HCT116 (cell line): ENCODE measurements at regions of chr1 and their contacts with region 1.

Region 1: DNA sequence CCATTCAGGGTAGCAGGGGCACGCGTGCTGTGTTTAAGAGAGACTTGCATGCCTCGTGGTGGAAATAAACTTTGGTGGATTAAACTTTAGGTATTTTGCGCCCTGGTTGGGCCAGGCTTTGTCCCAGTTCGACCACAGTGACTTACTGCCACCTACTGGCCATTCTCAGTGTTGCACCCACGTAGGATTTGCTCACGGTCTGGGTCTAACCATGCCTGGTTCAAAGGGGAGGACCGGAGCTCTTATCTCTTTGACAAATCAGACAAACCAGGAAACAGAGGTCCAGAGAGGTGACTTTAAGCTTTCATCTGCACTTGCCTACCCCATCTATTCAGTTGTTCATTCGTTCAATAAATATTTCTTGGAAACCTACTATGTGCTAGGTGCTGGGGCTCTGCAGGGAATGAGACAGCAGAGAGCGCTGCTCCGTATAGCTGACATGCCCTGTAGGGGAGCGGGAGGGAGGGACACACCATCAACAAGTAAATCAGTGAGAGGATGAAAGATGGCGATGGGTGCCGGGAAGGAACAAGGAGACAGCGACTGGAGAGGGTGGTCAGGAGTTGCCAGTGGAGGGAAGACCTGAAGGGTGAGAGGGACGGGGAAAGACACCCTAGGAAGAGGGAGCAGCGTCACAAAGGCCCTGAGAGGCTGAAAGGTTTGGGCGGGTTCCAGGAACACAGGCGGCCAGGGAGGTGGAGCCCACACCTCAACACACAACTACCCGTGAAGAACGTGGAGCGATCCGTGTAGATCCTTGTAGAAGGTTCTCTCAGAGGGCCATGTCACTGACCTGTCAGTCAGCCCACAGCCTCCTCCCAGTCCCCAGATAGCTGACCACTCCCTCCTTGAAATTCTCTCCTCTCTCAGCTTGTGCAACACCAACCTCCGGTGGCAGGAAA is 27.2 kb upstream of the TINAGL1 start:
- DNase-seq: peak; percentile 84
- ATAC-seq: peak; percentile 92
- H3K4me3 ChIP-seq: peak overlapping the region; percentile 41 to 52
- H3K27ac ChIP-seq: peak overlapping the region; percentile 44
- H3K4me1 ChIP-seq: peaks cover 12 to 21% of the 10 kb centered on the region in 2 experiments; a peak in 3 of 4 replicates
- H3K27me3 ChIP-seq: no peaks in the 10 kb centered on the region
- CTCF ChIP-seq: peak; percentile 89 to 98 (median 96)
- POLR2A ChIP-seq: peak; percentile 23
- RAD21 ChIP-seq: peak; percentile 96

Region 2: DNA sequence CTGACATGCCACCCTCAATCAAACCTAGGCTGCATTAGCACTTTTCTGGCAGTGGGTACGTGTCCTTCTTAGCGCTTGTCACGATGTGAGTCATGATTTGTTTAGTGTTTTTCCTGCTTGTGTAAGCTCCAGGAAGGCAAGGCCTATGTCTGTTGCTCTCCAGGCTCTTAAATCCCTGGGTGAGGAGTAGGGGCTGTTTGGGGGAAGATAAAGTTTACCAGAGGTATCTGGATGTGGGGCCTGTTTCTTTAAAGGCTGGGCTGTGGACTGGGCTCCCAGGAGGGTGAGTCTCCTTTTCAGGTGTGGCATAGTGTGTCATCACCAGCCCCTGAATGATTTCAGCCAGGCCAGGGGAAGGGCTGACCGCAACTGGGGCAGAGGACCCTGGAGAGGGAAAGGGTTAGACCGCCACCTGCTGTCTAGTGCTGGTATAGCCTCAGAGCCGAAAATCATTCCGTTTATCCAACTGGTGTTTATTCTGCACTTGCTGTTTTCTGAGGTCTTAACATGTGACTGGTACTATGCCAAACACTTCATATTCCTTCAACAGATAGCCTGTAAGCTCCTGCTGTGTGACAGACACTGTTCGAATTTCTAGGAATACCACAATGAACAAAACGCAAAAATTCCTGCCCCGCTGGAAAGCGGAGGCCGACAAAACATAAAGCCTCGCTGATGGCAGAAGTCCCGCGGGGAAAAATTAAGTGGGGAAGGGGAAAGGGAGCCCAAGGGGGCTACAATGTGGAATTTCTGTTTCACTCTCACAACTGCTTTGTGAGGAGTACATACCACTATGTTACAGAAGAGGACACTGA is 126.4 kb before region 1 on chr1:
- CTCF ChIA-PET with region 1: interaction called, 30 read pairs
- POLR2A ChIA-PET with region 1: interaction called, 7 read pairs
- RAD21 ChIA-PET with region 1: interaction called, 4 to 6 read pairs
- intact Hi-C with region 1: loop called (anchors 1 kb)
- DNase-seq: peak; percentile 84
- ATAC-seq: peak; percentile 89
- H3K4me3 ChIP-seq: peak overlapping the region in 1 of 2 experiments; percentile 10; a peak in 1 of 4 replicates
- H3K27ac ChIP-seq: peak overlapping the region; percentile 38
- H3K4me1 ChIP-seq: peaks cover 13 to 65% of the 10 kb centered on the region in 2 experiments
- H3K27me3 ChIP-seq: no peaks in the 10 kb centered on the region
- CTCF ChIP-seq: peak; percentile 95 to 98 (median 95)
- POLR2A ChIP-seq: no peak
- RAD21 ChIP-seq: peak; percentile 96

Region 3: DNA sequence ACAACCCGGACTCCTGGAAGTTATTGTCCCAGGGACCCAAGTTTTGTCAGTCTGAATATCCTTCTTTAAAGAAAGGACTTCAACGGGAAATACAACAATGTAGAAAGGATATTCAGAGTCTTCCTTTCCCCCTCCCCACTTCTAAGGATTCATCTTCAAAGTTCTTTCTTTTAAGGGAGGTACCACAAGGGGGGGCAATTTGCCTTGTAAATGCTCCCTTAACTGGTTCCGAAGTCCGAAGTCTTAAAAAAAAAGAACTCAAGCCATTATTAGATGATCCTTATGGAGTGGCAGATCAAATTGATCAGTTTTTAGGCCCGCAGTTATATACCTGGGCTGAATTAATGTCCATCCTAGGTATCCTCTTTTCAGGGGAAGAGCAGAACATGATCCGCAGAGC is 89.1 kb before region 1 on chr1:
- CTCF ChIA-PET with region 1: interaction called, 5 read pairs
- POLR2A ChIA-PET with region 1: no interaction called
- RAD21 ChIA-PET with region 1: no interaction called
- intact Hi-C with region 1: loop called (anchors 1 kb)
- DNase-seq: no peak
- ATAC-seq: no peak
- H3K4me3 ChIP-seq: no peak overlapping the region
- H3K27ac ChIP-seq: no peak overlapping the region
- H3K4me1 ChIP-seq: no peaks in the 10 kb centered on the region
- H3K27me3 ChIP-seq: no peaks in the 10 kb centered on the region
- CTCF ChIP-seq: peak; percentile 23 to 40 (median 26); a peak in 3 of 6 replicates
- POLR2A ChIP-seq: no peak
- RAD21 ChIP-seq: peak; percentile 54

Region 4: GRCh38 chr1:31715087-31715872 is 166.1 kb after region 1 on chr1:
- CTCF ChIA-PET with region 1: no interaction called
- POLR2A ChIA-PET with region 1: no interaction called
- RAD21 ChIA-PET with region 1: no interaction called
- intact Hi-C with region 1: no loop called
- DNase-seq: peak; percentile 75
- ATAC-seq: peak; percentile 94
- H3K4me3 ChIP-seq: peak overlapping the region; percentile 46 to 65
- H3K27ac ChIP-seq: peak overlapping the region; percentile 56
- H3K4me1 ChIP-seq: peaks cover 23 to 51% of the 10 kb centered on the region in 2 experiments
- H3K27me3 ChIP-seq: peaks cover 6% of the 10 kb centered on the region; the same call in 1 of the 2 replicates
- CTCF ChIP-seq: peak; percentile 55 to 96 (median 74)
- POLR2A ChIP-seq: peak; percentile 62
- RAD21 ChIP-seq: peak; percentile 54

Region 5: DNA sequence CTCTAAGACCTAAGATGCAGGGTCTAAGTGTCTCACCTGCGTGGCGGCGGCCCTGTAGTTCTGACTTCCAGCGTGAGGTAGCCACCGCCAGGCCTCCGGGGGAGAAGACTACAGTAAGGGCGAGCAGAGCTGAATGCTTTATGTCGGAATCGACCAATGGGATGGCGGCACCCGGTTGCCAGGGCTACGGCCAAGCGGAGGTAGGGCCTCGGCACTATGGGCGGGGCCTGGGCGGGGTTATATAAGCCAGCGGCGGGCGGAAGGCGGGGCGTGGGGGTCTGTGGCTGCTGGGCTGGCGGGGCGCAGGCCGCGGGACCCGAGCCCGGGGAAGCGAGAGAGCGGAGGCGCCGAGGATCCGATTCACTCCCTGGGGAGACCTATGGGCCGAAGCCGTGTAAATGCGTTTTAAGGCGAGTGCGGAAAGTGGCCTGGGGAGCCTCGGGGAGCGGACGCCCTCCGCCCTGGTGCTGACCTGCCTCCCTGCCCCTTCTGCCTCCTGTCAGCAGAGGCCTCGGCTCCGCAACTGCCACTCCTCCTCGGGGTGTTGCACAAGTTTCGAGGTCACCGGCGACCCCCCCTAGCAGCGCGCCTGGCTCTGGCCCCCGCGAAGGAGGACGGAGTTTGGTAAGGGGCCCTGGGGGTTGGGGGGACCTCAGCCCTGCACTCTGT is 1531.9 kb after region 1 on chr1 and contains the start of gene AZIN2:
- CTCF ChIA-PET with region 1: no interaction called
- POLR2A ChIA-PET with region 1: no interaction called
- RAD21 ChIA-PET with region 1: no interaction called
- intact Hi-C with region 1: no loop called
- DNase-seq: peak; percentile 86
- ATAC-seq: peak; percentile 99
- H3K4me3 ChIP-seq: peak within 1 kb of the TSS; percentile 66 to 82
- H3K27ac ChIP-seq: peak within 1 kb of the TSS; percentile 49; the same call in 1 of the 2 replicates
- H3K4me1 ChIP-seq: peaks cover 5 to 25% of the 10 kb centered on the region in 2 experiments
- H3K27me3 ChIP-seq: no peaks in the 10 kb centered on the region
- CTCF ChIP-seq: no peak
- POLR2A ChIP-seq: peak; percentile 81
- RAD21 ChIP-seq: no peak
- total RNA-seq, gene AZIN2: 7.8 TPM